G401 (cell line): ENCODE measurements at regions of chr1 and their contacts with region 1.

Region 1: GRCh38 chr1:193019442-193020026 is 39.6 kb downstream of the UCHL5 start:
- DNase-seq: peak; percentile 61

Region 2: GRCh38 chr1:192787914-192788585 is 231.5 kb before region 1 on chr1:
- in situ Hi-C with region 1: no loop called
- DNase-seq: peak; percentile 54

Region 3: DNA sequence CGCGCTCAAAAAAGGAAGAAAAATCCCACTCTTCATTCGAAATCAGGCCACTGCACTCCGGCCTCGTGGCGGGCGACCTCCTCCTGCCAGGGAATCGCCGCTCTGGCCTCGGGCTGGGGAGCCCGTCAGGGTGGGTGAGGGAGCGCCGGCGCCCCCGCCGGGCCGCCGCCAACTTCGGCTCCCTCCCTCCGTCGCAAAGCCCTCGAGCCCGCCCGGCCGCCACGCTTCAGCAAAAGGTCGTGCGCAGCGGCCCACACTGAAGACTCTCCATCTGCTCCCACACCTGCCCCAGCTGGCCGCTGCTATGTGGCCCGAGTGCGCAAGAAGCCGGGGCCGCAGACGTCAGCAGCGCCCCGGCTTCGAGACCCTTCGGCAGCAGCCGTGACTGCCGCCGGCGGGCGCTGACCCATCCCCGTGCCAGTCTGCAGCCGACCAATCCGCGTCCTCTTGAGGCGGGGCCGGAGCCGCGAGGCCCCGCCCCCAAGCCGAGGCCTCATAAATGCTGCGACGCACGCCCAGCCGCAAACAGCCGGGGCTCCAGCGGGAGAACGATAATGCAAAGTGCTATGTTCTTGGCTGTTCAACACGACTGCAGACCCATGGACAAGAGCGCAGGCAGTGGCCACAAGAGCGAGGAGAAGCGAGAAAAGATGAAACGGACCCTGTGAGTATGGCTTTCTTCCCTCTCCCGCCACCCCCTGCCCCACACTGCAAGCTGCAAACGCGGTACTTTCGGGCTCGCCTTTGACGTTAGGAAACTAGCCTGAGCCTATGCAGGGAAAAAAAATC is 210.8 kb before region 1 on chr1 and contains the start of gene RGS2:
- in situ Hi-C with region 1: loop called (anchors 25 kb)
- DNase-seq: peak; percentile 96
- total RNA-seq, gene RGS2: 27.8 and 40.3 TPM in 2 replicates

Region 4: DNA sequence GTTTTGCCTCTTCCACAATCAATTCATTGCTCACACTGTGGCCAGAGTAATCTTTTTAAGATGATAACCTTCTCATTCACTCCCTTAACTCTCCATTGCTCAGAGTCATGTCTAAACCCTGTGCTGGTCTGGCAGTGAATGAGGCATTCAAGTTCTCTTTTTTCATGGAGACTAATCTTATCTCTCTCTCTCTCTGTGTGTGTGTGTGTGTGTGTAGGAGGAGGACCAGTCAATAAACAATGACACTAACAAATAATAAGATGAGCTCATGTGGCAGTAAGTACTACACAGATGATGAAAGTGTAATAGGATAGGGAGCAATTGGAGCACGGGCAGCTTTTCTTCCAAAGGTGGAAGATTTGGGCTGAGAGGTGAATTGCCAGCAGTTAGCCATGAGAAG is 288.9 kb after region 1 on chr1:
- in situ Hi-C with region 1: no loop called
- DNase-seq: no peak

Region 5: DNA sequence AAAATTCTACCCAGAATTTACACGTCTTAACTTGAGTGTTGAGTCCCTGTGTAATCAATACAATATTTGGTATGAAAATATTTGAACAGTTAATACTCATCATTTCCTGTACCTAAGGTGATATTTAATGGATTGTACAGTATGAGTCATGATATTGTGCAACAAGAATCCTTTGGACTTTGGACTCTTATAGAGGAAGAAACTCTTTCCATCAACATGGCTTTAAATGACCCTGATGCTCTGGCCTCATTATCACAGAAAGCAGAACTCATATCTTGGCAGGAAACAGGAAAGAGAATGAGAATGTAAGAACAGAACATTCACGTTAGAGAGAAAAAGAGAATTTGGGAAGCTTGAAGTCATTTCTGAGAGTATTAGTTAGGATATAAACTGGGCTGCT is 335.6 kb after region 1 on chr1:
- in situ Hi-C with region 1: no loop called
- DNase-seq: no peak